ENCODE measurements at regions of chr2 and their contacts with region 1.

Region 1: DNA sequence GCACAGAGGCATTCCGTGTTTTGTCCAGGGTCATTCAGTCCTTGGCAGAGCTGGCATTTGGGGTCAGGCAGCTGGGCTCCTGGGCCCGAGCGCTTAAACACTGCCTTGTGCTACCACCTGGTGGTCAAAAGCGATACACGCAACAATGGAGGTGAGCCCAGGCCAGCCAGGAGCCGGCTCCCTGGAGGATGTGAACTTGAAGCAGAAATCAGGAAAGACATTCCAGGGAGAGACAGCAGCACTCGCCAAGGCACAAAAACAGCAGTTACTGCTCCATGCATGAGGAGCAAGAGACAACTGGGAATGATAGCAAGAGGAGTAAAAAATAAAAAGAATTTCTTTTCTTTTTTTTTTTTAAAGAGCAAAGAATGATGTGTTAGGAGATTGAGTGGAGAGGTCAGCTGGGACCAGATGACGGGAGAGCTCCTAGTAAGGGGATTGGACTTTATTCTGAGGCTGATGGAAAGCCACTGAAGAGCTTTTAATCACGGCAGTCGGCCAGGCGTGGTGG is 20.7 kb downstream of the SCYGR8 start:
- DNase-seq: peak; percentile 79

Region 2: GRCh38 chr2:227406177-227407031 is 360.0 kb before region 1 on chr2:
- CTCF ChIA-PET with region 1: interaction called, 10 read pairs
- POLR2A ChIA-PET with region 1: no interaction called
- DNase-seq: peak; percentile 77

Region 3: DNA sequence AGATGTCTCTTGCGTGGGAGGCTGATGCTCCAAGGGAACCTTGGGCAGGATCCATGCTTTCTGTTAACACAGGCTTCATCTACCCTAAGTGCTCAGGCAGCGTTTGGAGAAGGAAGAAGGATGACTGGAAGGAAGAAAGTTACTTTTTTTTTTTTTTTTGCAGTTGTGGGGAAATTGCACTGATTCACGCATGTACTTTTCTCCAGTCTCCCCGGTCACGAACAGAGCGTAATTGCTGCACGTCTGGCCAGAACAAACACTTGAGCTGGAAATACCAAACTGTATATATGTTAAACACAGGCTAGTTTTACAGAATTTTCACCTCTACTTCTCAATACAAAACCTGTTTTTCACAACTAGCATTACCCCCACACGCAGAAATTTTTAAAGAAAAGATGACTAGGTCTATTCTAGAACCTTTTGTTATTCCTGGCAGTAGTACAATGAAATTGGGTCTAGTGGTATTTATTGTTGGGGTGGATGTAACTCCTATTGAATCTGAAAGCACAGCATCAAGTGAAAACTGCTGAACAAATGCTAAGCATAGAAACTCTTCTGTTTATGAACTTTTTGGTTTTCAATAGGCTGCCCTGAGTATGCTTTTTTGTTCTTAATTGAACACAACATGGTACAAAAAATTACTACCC is 109.1 kb before region 1 on chr2:
- CTCF ChIA-PET with region 1: interaction called, 28 read pairs
- POLR2A ChIA-PET with region 1: interaction called, 3 read pairs
- DNase-seq: no peak